ENCODE measurements at regions of chr18 and their contacts with region 1.

Region 1: DNA sequence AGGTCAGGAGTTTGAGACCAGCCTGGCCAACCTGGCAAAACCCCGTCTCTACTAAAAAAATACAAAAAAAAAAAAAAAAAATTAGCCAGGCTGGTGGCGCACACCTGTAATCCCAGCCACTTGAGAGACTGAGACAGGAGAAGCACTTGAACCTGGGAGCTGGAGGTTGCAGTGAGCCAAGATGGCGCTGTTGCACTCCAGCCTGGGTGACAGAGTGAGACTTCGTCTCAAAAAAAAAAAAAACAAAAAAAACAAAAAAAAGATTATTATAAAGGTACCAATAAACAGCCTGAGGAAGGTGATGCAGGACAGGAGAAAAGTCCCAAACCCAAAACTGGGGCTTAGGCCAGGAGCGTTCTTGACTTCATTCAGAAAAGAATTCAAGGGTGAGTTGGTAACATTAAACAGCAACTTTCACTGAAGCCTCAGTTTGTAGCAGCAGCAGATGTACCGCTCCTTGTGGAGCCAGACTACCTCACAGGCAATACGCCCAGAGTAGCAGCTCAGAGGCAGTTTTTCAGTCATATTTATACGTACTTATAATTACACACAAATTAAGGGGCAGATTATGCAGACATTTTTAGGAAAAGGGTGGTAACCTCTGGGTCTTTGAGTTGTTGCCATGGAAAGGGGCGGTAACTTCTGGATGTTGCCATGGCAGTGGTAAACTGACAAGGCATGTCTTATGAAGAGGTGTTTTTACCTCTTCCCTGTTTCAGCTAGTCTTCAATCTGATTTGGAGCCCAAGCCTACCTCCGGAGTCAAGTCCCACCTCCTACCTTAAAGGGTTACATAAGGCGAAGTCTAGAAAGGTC is 1596.6 kb upstream of the CELF4 start:
- DNase-seq: no peak
- H3K4me3 ChIP-seq: no peak overlapping the region
- H3K27ac ChIP-seq: no peak overlapping the region
- H3K27me3 ChIP-seq: no peaks in the 10 kb centered on the region
- CTCF ChIP-seq: no peak

Region 2: GRCh38 chr18:39105104-39105503 is 57.1 kb before region 1 on chr18:
- intact Hi-C with region 1: loop called in 1 of 2 experiments (anchors 10 kb)
- DNase-seq: no peak
- H3K4me3 ChIP-seq: no peak overlapping the region
- H3K27ac ChIP-seq: no peak overlapping the region
- H3K27me3 ChIP-seq: no peaks in the 10 kb centered on the region
- CTCF ChIP-seq: no peak

Region 3: DNA sequence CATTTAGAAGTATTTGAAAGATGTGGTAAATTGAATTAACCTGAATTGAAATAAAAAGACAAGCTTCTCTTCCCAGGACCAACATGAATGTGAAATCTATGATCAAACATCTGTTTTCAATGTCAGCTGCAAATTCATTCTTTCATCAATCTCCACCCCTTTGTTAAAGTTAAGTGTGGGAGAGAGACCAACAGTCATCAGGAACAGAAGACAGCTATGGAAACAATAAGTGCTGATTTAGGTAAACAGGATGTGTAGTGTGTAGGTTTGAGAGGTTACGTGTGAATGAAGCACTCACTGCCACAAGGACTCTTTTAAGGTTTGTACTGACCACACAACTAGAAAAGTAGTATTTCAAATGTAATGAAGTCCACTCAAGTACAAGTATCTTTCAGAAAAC is 63.2 kb after region 1 on chr18:
- intact Hi-C with region 1: no loop called
- DNase-seq: no peak
- H3K4me3 ChIP-seq: no peak overlapping the region
- H3K27ac ChIP-seq: no peak overlapping the region
- H3K27me3 ChIP-seq: peaks cover 0 to 4% (median 0%) of the 10 kb centered on the region in 45 donors
- CTCF ChIP-seq: no peak